HAP-1 (cell line): ENCODE measurements at regions of chr7 and their contacts with region 1.

Region 1: DNA sequence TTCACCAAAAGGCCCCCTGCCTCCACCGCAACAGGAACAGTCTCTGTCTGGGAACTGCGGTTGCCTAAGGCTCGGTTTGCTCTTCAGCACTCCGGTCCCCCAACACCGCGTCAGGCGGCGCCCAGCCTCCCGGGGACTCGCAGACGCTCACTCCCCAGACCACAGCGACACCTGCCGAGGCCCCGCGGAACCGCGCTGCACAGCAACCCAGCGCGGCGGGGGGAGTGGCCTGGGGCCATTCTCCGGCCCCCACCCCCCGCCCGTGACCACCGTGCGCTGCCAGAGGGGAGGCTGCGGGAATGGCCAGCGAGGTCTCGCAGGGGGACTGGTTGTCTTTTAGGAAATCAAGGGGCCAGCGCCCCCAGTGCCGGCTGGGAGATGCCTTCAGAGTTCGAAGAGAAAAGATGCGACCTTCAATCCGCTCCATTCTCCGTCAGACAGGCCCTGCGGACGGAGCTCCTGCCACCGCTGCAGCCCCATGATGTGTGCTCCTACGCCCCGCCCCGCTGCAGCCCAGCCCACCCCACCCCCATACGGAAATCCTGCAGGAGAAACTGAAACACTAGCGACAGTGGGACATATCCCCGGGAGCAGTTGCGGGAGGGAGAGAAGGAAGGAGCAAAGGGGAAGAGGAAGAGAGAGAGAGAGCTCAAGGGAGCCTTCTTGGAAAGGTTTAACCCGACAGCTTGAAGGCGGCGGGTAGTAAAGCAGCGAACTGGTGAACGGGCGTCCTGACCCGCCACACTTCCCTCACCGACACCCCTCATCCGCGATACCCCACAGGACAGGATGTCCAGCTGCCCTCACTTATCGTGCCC is 137.4 kb upstream of the CDCA7L start:
- DNase-seq: peak; percentile 74 to 97
- H3K4me3 ChIP-seq: peak overlapping the region; percentile 55
- H3K4me1 ChIP-seq: peaks cover 3% of the 10 kb centered on the region
- H3K27me3 ChIP-seq: no peaks in the 10 kb centered on the region

Region 2: DNA sequence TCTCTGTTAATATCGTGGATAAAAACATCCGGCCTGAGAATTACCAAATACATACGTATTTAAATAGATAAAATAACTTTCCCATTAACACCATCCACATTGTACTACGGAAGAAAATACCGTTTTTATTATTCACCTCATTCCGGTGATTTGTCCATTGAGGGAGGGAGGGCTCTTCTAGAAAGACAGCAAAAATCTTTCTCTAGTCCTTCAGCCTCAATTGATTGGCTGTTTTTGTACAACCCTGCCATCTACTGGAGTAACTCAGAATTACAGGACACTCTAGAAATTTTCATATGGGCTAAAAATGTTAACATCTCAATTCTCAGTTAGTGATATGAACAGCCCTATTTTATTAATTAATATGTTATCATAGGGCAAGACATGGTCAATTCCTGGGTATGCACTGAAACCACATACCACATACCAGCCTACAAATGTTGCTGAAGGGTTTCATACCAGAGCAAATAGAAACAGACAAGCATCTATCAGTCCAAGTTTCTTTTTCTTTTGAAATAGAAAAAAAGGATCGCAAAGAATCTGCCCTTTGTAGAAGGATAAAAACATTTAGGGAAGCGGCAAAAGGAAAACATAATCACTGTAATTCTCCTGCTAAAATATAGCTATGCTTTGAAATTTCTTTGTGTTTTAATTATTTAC is 81.6 kb before region 1 on chr7:
- in situ Hi-C with region 1: loop called (anchors 10 kb)
- DNase-seq: peak; percentile 57 to 73
- H3K4me3 ChIP-seq: no peak overlapping the region
- H3K4me1 ChIP-seq: no peaks in the 10 kb centered on the region
- H3K27me3 ChIP-seq: peaks cover 5% of the 10 kb centered on the region; the same call in 1 of the 2 replicates

Region 3: DNA sequence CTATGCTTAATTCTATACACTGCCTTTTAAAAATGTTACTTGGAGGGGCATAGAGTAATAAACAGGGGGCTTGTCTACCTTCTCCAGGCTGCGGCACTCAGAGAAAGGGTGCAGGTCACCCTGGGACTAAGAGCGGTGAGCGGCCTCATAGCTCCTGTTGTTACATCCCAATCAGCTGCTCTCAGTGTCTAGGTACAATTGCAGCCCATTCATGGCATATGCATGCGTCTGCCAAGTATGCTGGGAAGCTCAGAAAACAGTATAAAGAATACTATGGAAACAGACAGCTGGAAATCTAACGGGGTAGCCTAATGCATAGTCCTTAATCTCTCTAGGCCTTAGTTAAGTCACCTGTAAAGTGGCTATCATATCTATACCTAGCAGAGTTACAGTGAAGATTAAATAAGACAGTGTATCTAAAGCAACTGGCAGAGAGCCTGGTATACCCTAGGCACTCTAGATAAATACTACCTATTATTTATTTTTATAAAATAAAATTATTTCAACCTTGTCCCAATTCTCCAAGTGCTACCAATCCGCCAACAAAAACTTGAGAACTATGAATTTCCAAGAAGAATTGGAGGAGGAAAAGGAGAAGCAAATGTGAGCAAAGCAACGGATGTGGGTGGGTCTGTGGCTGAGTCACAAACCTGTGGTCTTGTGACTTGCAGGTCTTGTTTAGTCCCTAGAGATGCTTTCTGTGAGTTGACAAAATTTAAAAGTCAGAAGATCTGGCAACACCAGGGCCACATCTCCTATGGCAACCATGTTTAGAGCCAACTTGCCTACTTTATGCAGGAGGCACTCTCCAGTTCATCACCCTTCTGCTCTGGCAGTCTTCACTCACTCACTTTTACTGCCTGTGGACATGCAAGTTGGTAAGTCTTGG is 90.8 kb after region 1 on chr7:
- in situ Hi-C with region 1: no loop called
- DNase-seq: no peak
- H3K4me3 ChIP-seq: no peak overlapping the region
- H3K4me1 ChIP-seq: no peaks in the 10 kb centered on the region
- H3K27me3 ChIP-seq: no peaks in the 10 kb centered on the region

Region 4: GRCh38 chr7:22295402-22296264 is 212.5 kb after region 1 on chr7:
- in situ Hi-C with region 1: no loop called
- DNase-seq: no peak
- H3K4me3 ChIP-seq: no peak overlapping the region
- H3K4me1 ChIP-seq: peaks cover 9% of the 10 kb centered on the region
- H3K27me3 ChIP-seq: no peaks in the 10 kb centered on the region